ENCODE measurements at regions of chr15 and their contacts with region 1.

Region 1: GRCh38 chr15:89358755-89359439 is 24.3 kb upstream of the POLG start:
- DNase-seq: peak; percentile 59
- ATAC-seq: peak; percentile 88
- H3K4me3 ChIP-seq: peak overlapping the region; percentile 40 to 55
- H3K27ac ChIP-seq: peak overlapping the region; percentile 28; the same call in 1 of the 2 replicates
- H3K4me1 ChIP-seq: peaks cover 2 to 16% of the 10 kb centered on the region in 2 experiments; a peak in 1 of 4 replicates
- H3K27me3 ChIP-seq: peaks cover 10% of the 10 kb centered on the region; the same call in 1 of the 2 replicates
- CTCF ChIP-seq: peak; percentile 83 to 99 (median 95)
- POLR2A ChIP-seq: no peak
- RAD21 ChIP-seq: peak; percentile 97

Region 2: DNA sequence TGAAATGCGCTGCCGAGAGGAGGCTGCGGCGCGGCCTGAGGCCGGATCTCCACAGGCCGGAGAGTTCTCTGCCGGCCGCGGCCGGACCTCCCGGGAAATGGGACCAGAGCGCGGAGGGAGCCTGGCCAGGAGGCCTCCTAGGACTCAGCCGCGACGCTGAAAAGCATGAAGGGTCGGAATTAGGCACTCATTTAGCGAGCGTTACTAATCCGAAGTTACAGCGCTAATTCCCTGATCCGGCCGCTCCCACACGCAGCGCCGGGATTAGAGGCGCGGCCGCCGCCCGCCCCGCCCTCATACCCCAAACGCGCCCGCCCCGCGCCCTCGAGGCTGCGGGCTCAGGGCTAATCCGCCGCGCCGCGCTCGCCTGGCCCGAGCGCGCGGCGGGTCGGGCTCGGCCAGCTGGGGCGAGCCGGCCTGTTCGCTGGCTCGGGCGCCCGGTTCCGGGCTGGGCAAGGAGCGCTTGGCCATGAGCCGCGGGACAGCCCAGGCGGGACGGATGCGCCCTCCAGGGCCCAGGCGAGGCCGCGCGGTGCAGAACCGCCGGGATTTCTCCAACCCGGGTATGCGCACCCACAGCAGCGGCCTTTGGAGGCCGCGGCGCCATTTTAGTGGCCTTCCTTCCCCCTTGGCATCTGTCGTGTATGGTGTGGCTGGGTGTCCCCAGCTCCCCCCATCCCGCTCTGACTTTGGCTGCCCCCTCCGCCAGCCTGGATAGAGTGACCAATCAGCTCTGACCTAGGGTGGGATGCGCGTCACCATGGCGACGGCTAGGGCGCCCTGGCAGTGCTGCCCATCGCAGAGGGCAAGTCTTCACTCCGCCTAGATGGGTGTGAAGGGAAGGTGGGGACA is 12.6 kb after region 1 on chr15:
- CTCF ChIA-PET with region 1: interaction called, 15 read pairs
- POLR2A ChIA-PET with region 1: no interaction called
- RAD21 ChIA-PET with region 1: interaction called in 1 of 2 experiments, 3 read pairs
- intact Hi-C with region 1: no loop called
- DNase-seq: no peak
- ATAC-seq: no peak
- H3K4me3 ChIP-seq: no peak overlapping the region
- H3K27ac ChIP-seq: no peak overlapping the region
- H3K4me1 ChIP-seq: no peaks in the 10 kb centered on the region
- H3K27me3 ChIP-seq: peaks cover 8% of the 10 kb centered on the region; the same call in 1 of the 2 replicates
- CTCF ChIP-seq: no peak
- POLR2A ChIP-seq: no peak
- RAD21 ChIP-seq: no peak

Region 3: GRCh38 chr15:89416141-89416853 is 57.4 kb after region 1 on chr15:
- CTCF ChIA-PET with region 1: interaction called, 8 read pairs
- POLR2A ChIA-PET with region 1: no interaction called
- RAD21 ChIA-PET with region 1: no interaction called
- intact Hi-C with region 1: loop called (anchors 5 kb)
- DNase-seq: peak; percentile 71
- ATAC-seq: peak; percentile 87
- H3K4me3 ChIP-seq: no peak overlapping the region
- H3K27ac ChIP-seq: no peak overlapping the region
- H3K4me1 ChIP-seq: peaks cover 0 to 6% of the 10 kb centered on the region in 2 experiments; a peak in 2 of 4 replicates
- H3K27me3 ChIP-seq: peaks cover 4% of the 10 kb centered on the region; the same call in 1 of the 2 replicates
- CTCF ChIP-seq: peak; percentile 98 to 99 (median 99)
- POLR2A ChIP-seq: no peak
- RAD21 ChIP-seq: peak; percentile 65

Region 4: DNA sequence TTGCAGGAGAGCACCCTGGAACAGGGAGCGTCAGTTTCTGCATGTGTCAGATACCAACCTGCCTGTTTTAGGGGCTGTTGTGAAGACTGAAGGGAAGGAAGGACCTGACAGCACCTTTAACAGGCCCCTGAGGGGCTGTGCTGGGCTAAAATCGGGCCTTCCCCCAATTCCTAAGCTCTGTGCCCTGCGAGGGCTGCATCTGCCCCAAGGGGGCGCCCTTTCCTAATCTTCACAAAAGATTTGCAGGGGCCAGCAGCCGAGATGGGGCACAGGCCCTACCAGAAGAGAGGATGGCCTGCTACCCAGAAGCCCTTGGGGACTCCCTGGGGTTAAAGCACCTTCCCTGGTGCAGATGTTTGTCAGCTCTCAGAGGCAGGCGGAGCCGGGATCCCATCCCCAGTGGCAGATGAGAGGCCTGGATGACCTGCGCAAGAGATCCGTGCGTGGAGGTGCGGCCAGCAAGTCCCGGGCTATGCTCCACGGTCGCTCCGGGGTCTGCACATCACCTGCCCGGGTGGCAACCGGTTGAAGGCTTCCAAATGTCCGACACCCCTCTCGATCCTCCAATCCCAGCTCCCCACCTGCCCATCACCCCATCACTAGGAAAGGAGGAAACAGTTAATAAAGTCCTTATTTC is 83.9 kb after region 1 on chr15:
- CTCF ChIA-PET with region 1: interaction called, 47 read pairs
- POLR2A ChIA-PET with region 1: no interaction called
- RAD21 ChIA-PET with region 1: no interaction called
- intact Hi-C with region 1: no loop called
- DNase-seq: peak; percentile 44
- ATAC-seq: peak; percentile 91
- H3K4me3 ChIP-seq: no peak overlapping the region
- H3K27ac ChIP-seq: no peak overlapping the region
- H3K4me1 ChIP-seq: peaks cover 2 to 6% of the 10 kb centered on the region in 2 experiments; a peak in 2 of 4 replicates
- H3K27me3 ChIP-seq: no peaks in the 10 kb centered on the region
- CTCF ChIP-seq: peak; percentile 74 to 96 (median 89)
- POLR2A ChIP-seq: no peak
- RAD21 ChIP-seq: peak; percentile 72

Region 5: GRCh38 chr15:89485855-89486361 is 127.0 kb after region 1 on chr15:
- CTCF ChIA-PET with region 1: interaction called, 10 read pairs
- POLR2A ChIA-PET with region 1: no interaction called
- RAD21 ChIA-PET with region 1: no interaction called
- intact Hi-C with region 1: no loop called
- DNase-seq: no peak
- ATAC-seq: peak; percentile 59
- H3K4me3 ChIP-seq: no peak overlapping the region
- H3K27ac ChIP-seq: no peak overlapping the region
- H3K4me1 ChIP-seq: peaks cover 5 to 9% of the 10 kb centered on the region in 2 experiments; a peak in 3 of 4 replicates
- H3K27me3 ChIP-seq: no peaks in the 10 kb centered on the region
- CTCF ChIP-seq: no peak
- POLR2A ChIP-seq: no peak
- RAD21 ChIP-seq: no peak

Measured in HCT116 (cell line).